ENCODE measurements at regions of chr5 and their contacts with region 1.

Region 1: GRCh38 chr5:180868960-180869359 is 7.9 kb upstream of the ZFP62 start:
- DNase-seq: peak; percentile 79
- H3K4me3 ChIP-seq: no peak overlapping the region
- H3K27ac ChIP-seq: no peak overlapping the region
- H3K4me1 ChIP-seq: peaks cover 4% of the 10 kb centered on the region
- H3K27me3 ChIP-seq: peaks cover 2 to 7% of the 10 kb centered on the region in 2 experiments
- CTCF ChIP-seq: peak; percentile 76 to 79
- POLR2A ChIP-seq: no peak

Region 2: GRCh38 chr5:180802325-180803180 is 66.4 kb before region 1 on chr5 and contains the start of gene MGAT1:
- CTCF ChIA-PET with region 1: interaction called, 5 read pairs
- POLR2A ChIA-PET with region 1: no interaction called
- dilution Hi-C with region 1: no loop called
- intact Hi-C with region 1: loop called (anchors 1 kb)
- DNase-seq: peak; percentile 87
- H3K4me3 ChIP-seq: peak within 1 kb of the TSS; percentile 46 to 98 (median 69)
- H3K27ac ChIP-seq: peak within 1 kb of the TSS; percentile 67
- H3K4me1 ChIP-seq: peaks cover 44% of the 10 kb centered on the region
- H3K27me3 ChIP-seq: no peaks in the 10 kb centered on the region
- CTCF ChIP-seq: no peak
- POLR2A ChIP-seq: peak; percentile 85
- total RNA-seq, gene MGAT1: 108 and 123 TPM in 2 replicates

Region 3: GRCh38 chr5:180831139-180832048 is 37.6 kb before region 1 on chr5:
- CTCF ChIA-PET with region 1: interaction called, 11 read pairs
- POLR2A ChIA-PET with region 1: no interaction called
- dilution Hi-C with region 1: no loop called
- intact Hi-C with region 1: no loop called
- DNase-seq: peak; percentile 80
- H3K4me3 ChIP-seq: peak overlapping the region; percentile 51 to 63 (median 59)
- H3K27ac ChIP-seq: peak overlapping the region; percentile 69
- H3K4me1 ChIP-seq: peaks cover 10% of the 10 kb centered on the region
- H3K27me3 ChIP-seq: no peaks in the 10 kb centered on the region
- CTCF ChIP-seq: peak in 1 of 2 donors; percentile 32
- POLR2A ChIP-seq: peak; percentile 87

Region 4: GRCh38 chr5:181167814-181168488 is 299.0 kb after region 1 on chr5:
- CTCF ChIA-PET with region 1: interaction called, 11 read pairs
- POLR2A ChIA-PET with region 1: no interaction called
- dilution Hi-C with region 1: no loop called
- intact Hi-C with region 1: loop called (anchors 2 kb)
- DNase-seq: no peak
- H3K4me3 ChIP-seq: no peak overlapping the region
- H3K27ac ChIP-seq: no peak overlapping the region
- H3K4me1 ChIP-seq: peaks cover 12% of the 10 kb centered on the region
- H3K27me3 ChIP-seq: peaks cover 21 to 33% of the 10 kb centered on the region in 2 experiments
- CTCF ChIP-seq: peak; percentile 45 to 47
- POLR2A ChIP-seq: no peak

Region 5: GRCh38 chr5:181181650-181182565 is 312.9 kb after region 1 on chr5:
- CTCF ChIA-PET with region 1: interaction called, 5 read pairs
- POLR2A ChIA-PET with region 1: no interaction called
- dilution Hi-C with region 1: no loop called
- intact Hi-C with region 1: loop called (anchors 1 kb)
- DNase-seq: peak; percentile 77
- H3K4me3 ChIP-seq: no peak overlapping the region
- H3K27ac ChIP-seq: no peak overlapping the region
- H3K4me1 ChIP-seq: no peaks in the 10 kb centered on the region
- H3K27me3 ChIP-seq: peaks cover 3 to 4% of the 10 kb centered on the region in 2 experiments
- CTCF ChIP-seq: peak; percentile 76 to 79
- POLR2A ChIP-seq: no peak